B cell (primary cell): ENCODE measurements at regions of chr1 and their contacts with region 1.

Region 1: GRCh38 chr1:41662061-41662764 is 177.7 kb upstream of the EDN2 start:
- DNase-seq: peak; percentile 86
- ATAC-seq: peak; percentile 78
- H3K4me3 ChIP-seq: peak overlapping the region in 4 of 5 experiments; percentile 43 to 88 (median 67)
- H3K4me3 Mint-ChIP-seq: peak overlapping the region; percentile 70
- H3K27ac ChIP-seq: peak overlapping the region; percentile 69 to 87
- H3K27ac Mint-ChIP-seq: peak overlapping the region; percentile 80
- H3K4me1 ChIP-seq: peaks cover 44 to 79% of the 10 kb centered on the region in 2 donors
- H3K4me1 Mint-ChIP-seq: peaks cover 79% of the 10 kb centered on the region
- H3K27me3 ChIP-seq: no peaks in the 10 kb centered on the region
- H3K27me3 Mint-ChIP-seq: no peaks in the 10 kb centered on the region
- CTCF ChIP-seq: no peak

Region 2: DNA sequence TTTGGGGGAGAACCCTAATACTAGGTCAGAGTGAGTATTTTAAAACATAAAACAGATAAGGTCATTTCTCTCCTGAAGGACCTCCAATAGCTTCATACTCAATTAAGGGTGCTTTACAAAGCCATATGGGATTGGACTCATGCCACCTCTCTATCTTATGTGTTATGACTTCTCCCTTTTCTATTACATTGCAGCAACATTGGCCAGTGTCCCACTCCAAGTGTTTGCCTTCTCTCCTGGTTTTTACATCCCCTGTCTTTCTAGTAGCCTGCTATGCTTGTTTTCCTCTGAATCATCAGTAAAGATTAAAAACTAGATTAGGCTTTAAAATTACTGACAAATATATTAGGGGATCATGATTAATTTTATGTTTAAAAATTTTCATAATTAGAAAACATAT is 486.7 kb before region 1 on chr1:
- CTCF ChIA-PET with region 1: no interaction called
- POLR2A ChIA-PET with region 1: no interaction called
- intact Hi-C with region 1: no loop called
- DNase-seq: no peak
- ATAC-seq: no peak
- H3K4me3 ChIP-seq: no peak overlapping the region
- H3K4me3 Mint-ChIP-seq: no peak overlapping the region
- H3K27ac ChIP-seq: no peak overlapping the region
- H3K27ac Mint-ChIP-seq: no peak overlapping the region
- H3K4me1 ChIP-seq: peaks cover 14 to 30% of the 10 kb centered on the region in 2 donors
- H3K4me1 Mint-ChIP-seq: peaks cover 34% of the 10 kb centered on the region
- H3K27me3 ChIP-seq: no peaks in the 10 kb centered on the region
- H3K27me3 Mint-ChIP-seq: no peaks in the 10 kb centered on the region
- CTCF ChIP-seq: no peak

Region 3: DNA sequence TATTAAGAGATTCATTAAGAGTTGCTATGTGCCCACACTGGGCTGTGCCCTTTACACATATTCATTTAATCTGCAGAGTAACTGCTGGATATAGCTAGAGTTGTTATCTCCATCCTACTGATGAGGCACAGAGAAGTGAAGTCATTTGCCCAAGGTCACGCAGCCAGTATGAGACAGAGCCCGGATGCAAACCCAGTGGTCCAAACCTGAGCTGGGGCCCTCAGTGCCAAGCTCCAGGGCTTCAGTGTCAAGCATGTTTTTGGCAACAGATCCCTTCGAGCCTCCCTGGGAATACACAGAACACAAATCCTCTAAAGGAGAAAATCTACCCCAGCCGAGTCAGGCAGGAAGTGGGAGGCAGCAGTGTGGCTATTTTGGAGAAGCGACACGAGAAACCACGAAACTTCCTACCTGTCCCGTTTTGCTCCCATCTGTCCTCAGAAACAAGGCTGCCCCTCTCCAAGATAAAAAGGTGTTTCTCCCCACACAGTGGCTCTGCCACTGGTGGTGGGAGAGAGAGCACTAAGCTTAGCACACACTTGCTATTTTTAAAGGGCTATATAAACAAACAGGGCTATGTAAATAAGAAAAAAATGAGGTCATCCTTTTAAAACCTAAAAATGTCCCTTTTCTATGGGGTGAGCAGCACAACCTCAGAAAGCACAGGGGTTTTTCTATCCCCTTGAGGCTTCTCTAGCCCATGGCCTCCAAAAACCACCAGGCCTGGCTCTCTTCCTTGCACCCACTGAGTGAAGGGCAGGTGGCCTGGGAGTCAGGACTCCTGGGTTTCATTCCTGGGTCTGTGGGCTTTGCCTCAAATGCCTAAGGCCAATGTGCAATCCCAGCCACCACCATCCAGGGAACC is 39.1 kb before region 1 on chr1:
- CTCF ChIA-PET with region 1: interaction called, 4 read pairs
- POLR2A ChIA-PET with region 1: no interaction called
- intact Hi-C with region 1: loop called (anchors 1 kb)
- DNase-seq: peak; percentile 74
- ATAC-seq: peak; percentile 94
- H3K4me3 ChIP-seq: peak overlapping the region in 4 of 5 experiments; percentile 16 to 56 (median 34)
- H3K4me3 Mint-ChIP-seq: peak overlapping the region; percentile 84
- H3K27ac ChIP-seq: peak overlapping the region; percentile 62 to 77
- H3K27ac Mint-ChIP-seq: peak overlapping the region; percentile 89
- H3K4me1 ChIP-seq: peaks cover 27 to 42% of the 10 kb centered on the region in 2 donors
- H3K4me1 Mint-ChIP-seq: peaks cover 65% of the 10 kb centered on the region
- H3K27me3 ChIP-seq: no peaks in the 10 kb centered on the region
- H3K27me3 Mint-ChIP-seq: no peaks in the 10 kb centered on the region
- CTCF ChIP-seq: no peak

Region 4: GRCh38 chr1:41728403-41729202 is 66.4 kb after region 1 on chr1:
- CTCF ChIA-PET with region 1: interaction called, 8 read pairs
- POLR2A ChIA-PET with region 1: interaction called, 4 read pairs
- intact Hi-C with region 1: loop called (anchors 2 kb)
- DNase-seq: peak; percentile 92
- ATAC-seq: peak; percentile 79
- H3K4me3 ChIP-seq: peak overlapping the region in 1 of 5 experiments; percentile 58
- H3K4me3 Mint-ChIP-seq: peak overlapping the region; percentile 81
- H3K27ac ChIP-seq: peak overlapping the region; percentile 86 to 94
- H3K27ac Mint-ChIP-seq: peak overlapping the region; percentile 84
- H3K4me1 ChIP-seq: peaks cover 43 to 71% of the 10 kb centered on the region in 2 donors
- H3K4me1 Mint-ChIP-seq: peaks cover 67% of the 10 kb centered on the region
- H3K27me3 ChIP-seq: no peaks in the 10 kb centered on the region
- H3K27me3 Mint-ChIP-seq: no peaks in the 10 kb centered on the region
- CTCF ChIP-seq: no peak

Region 5: DNA sequence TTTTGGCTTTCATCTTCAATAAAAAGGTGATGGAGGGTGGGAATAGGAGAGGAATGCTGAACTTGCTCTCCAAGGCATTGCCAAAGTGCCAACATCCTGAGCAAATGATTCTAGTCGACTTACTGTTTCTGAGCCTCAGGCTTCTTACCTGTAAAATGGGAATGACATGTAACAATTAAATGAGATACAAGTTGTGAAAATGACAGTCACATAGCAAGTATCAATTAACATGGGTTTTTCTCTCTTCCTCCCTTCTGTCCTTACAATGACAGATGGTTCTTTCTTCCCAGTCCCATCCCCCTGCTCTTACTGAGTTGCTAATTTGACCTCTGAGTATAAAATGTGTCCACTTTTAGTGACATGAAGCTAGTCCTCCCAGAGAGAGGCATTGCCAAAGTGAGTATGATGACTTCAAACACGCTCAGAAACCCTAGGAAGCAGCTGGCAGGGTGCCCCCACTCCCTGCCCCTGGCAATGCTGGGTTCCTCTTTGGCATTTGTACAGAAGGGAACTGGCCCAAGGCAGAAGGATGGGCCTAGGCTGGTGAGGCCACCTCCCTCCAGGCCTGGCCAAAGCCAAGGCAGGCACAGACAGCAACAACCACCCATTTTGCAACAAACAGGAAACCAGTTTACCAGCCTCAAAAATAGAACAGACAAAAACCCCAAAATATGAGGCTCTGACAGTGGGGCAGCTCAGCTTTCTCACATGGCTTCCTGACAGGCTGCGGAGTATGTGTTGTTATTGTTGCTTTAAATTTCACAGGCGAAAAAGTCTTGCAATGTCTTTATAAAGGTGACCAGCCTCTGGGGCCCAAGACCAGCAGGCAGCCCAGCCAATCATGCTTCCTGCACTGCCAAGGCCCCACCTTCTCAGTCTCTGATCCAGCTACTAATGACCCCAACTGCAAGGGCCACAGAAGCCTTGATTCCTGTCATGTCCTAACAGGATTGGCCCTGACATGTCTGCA is 140.6 kb after region 1 on chr1:
- CTCF ChIA-PET with region 1: no interaction called
- POLR2A ChIA-PET with region 1: no interaction called
- intact Hi-C with region 1: loop called (anchors 5 kb)
- DNase-seq: peak; percentile 63
- ATAC-seq: peak; percentile 79
- H3K4me3 ChIP-seq: peak overlapping the region in 1 of 5 experiments; percentile 16
- H3K4me3 Mint-ChIP-seq: peak overlapping the region; percentile 71
- H3K27ac ChIP-seq: peak overlapping the region; percentile 56 to 70
- H3K27ac Mint-ChIP-seq: peak overlapping the region; percentile 84
- H3K4me1 ChIP-seq: peaks cover 69 to 82% of the 10 kb centered on the region in 2 donors
- H3K4me1 Mint-ChIP-seq: peaks cover 74% of the 10 kb centered on the region
- H3K27me3 ChIP-seq: no peaks in the 10 kb centered on the region
- H3K27me3 Mint-ChIP-seq: no peaks in the 10 kb centered on the region
- CTCF ChIP-seq: no peak

Region 6: GRCh38 chr1:42035830-42036604 is 373.8 kb after region 1 on chr1:
- CTCF ChIA-PET with region 1: no interaction called
- POLR2A ChIA-PET with region 1: no interaction called
- intact Hi-C with region 1: loop called (anchors 10 kb)
- DNase-seq: peak; percentile 95
- ATAC-seq: peak; percentile 94
- H3K4me3 ChIP-seq: peak overlapping the region; percentile 13 to 93 (median 83)
- H3K4me3 Mint-ChIP-seq: peak overlapping the region; percentile 72
- H3K27ac ChIP-seq: peak overlapping the region in 1 of 2 donors; percentile 34
- H3K27ac Mint-ChIP-seq: peak overlapping the region; percentile 67
- H3K4me1 ChIP-seq: peaks cover 13 to 15% of the 10 kb centered on the region in 2 donors
- H3K4me1 Mint-ChIP-seq: peaks cover 12% of the 10 kb centered on the region
- H3K27me3 ChIP-seq: peaks cover 0 to 6% (median 0%) of the 10 kb centered on the region in 4 experiments
- H3K27me3 Mint-ChIP-seq: peaks cover 13% of the 10 kb centered on the region
- CTCF ChIP-seq: no peak